Right ventricle myocardium superior (tissue), 1 donor: ENCODE measurements at regions of chr3 and their contacts with region 1.

Region 1: GRCh38 chr3:97932387-97932801 is 39.8 kb downstream of the RIOX2 start:
- DNase-seq: peak; percentile 50
- ATAC-seq: peak; percentile 84

Region 2: GRCh38 chr3:96900566-96900965 is 1031.8 kb before region 1 on chr3:
- intact Hi-C with region 1: no loop called
- DNase-seq: no peak
- ATAC-seq: no peak

Region 3: DNA sequence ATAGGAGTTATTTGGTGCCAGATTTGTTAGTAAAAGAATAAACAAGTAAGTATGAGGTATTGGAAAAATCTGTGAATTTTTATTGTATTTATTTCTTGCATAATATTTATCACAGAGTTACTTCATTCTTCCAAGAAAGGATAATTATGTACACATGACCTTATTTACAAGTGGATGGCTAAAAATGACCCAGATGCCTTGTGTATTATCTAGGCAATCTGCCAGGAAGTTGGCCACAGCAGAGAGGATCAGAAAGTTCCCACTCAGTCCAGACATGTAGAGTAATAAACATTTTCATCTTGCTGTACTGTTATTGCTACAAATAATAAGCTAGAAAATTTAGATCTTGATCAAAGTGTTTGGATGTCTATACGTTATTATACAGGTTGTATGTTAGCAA is 800.9 kb before region 1 on chr3:
- intact Hi-C with region 1: no loop called
- DNase-seq: no peak
- ATAC-seq: no peak

Region 4: GRCh38 chr3:97821810-97822775 is 110.3 kb before region 1 on chr3 and contains the start of gene CRYBG3:
- intact Hi-C with region 1: loop called (anchors 10 kb)
- DNase-seq: peak; percentile 91
- ATAC-seq: peak; percentile 98
- total RNA-seq, gene CRYBG3: 18.6 TPM